ENCODE measurements at regions of chr1 and their contacts with region 1.

Region 1: DNA sequence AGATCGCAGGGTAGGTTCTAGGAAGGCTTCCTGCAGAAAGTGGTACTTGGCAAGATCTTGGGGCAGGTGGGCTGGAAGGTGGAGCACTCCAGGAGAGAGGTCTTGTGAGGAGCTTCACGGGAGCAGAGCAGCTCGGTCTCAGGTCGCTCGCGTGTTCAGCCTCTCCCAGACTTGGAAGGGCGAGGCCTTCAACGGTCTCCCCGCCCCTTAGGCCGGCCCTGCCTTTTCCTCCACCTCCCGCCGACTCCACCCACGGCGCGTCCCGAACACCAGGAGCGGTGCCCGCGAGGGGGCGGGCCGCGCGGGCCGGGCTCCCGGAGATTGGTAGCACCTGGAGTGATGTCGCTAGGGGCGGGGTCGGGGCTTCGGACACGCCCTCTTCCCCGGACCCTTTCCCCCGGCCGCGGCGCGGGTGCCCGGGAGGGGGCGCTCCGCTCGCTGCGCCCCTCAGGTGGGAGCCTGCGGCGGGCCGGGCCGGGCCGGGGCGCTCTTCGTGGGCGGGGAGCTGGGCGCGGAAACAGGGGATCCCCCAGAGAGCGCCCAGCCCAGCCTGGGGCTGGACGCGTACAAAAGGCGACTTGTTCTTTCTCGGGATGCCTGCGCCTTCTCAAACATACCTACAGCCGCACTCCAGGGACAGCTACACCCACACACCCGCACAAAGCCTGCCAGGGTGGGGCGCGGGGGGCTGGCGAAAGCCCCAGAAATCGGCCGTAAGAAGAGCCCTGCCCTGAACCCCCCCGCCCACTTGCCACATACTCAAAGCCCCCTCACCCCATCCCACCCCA is 35.5 kb downstream of the AHDC1 start:
- DNase-seq: peak; percentile 93
- ATAC-seq: peak; percentile 67
- H3K4me3 ChIP-seq: peak overlapping the region; percentile 47 to 66 (median 54)
- H3K27ac ChIP-seq: peak overlapping the region; percentile 67
- H3K4me1 ChIP-seq: peaks cover 96% of the 10 kb centered on the region
- H3K27me3 ChIP-seq: no peaks in the 10 kb centered on the region
- CTCF ChIP-seq: peak; percentile 78
- EP300 ChIP-seq: no peak
- POLR2A ChIP-seq: peak in 1 of 2 experiments; percentile 51; a peak in 2 of 4 replicates
- RAD21 ChIP-seq: peak; percentile 87

Region 2: DNA sequence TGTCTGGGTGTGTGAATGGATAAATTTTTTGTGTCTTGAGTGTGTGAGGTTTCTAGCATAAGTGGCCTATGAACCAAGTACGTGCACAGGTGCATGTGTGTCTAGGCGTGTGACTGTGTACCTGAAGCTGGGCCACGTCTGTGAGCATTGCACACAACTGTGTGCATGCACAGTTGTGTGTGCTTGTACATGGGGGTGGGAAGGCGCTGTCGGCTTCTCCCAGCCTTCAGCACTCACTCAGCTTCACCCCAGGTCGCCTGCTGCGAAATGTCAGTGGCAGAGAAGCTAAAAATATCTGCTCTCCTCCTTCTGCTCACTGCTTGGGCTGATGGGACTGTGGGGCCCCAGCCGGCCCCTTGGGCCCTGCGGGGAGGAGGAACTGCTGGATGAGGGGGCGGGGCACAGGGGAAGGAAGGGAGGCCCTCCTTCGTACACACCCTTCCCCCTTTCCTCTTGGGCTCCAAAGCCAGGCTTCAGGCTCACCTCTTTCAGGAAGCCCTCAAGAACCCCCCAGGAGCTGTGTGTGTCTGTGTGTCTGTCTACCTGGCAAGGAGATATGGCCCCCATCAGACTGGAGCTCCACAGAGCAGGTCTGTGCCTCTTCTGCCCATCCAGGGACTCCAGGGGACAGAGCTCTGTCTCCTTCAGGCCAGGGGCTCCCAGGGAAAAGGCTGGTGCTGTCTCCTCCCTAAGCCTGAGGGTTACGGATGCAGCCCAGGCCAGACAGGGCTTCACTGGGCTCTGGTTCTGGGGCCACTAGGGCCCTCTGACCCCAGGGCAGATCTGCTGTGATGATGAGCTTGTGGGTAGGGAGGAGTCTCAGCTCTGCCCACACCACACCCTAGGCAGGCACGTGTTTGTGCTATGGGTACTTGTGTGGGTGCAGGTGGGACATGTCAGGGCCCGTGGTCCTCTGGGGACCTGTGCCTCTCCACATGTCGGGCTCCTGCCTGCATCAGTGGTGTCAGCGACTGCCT is 42.9 kb before region 1 on chr1:
- CTCF ChIA-PET with region 1: no interaction called
- POLR2A ChIA-PET with region 1: interaction called, 10 read pairs
- in situ Hi-C with region 1: no loop called
- intact Hi-C with region 1: loop called (anchors 5 kb)
- DNase-seq: no peak
- ATAC-seq: no peak
- H3K4me3 ChIP-seq: peak overlapping the region in 2 of 3 experiments; percentile 11 to 79; a peak in 2 of 6 replicates
- H3K27ac ChIP-seq: no peak overlapping the region
- H3K4me1 ChIP-seq: peaks cover 88% of the 10 kb centered on the region
- H3K27me3 ChIP-seq: no peaks in the 10 kb centered on the region
- CTCF ChIP-seq: no peak
- EP300 ChIP-seq: no peak
- POLR2A ChIP-seq: no peak
- RAD21 ChIP-seq: no peak

Region 3: DNA sequence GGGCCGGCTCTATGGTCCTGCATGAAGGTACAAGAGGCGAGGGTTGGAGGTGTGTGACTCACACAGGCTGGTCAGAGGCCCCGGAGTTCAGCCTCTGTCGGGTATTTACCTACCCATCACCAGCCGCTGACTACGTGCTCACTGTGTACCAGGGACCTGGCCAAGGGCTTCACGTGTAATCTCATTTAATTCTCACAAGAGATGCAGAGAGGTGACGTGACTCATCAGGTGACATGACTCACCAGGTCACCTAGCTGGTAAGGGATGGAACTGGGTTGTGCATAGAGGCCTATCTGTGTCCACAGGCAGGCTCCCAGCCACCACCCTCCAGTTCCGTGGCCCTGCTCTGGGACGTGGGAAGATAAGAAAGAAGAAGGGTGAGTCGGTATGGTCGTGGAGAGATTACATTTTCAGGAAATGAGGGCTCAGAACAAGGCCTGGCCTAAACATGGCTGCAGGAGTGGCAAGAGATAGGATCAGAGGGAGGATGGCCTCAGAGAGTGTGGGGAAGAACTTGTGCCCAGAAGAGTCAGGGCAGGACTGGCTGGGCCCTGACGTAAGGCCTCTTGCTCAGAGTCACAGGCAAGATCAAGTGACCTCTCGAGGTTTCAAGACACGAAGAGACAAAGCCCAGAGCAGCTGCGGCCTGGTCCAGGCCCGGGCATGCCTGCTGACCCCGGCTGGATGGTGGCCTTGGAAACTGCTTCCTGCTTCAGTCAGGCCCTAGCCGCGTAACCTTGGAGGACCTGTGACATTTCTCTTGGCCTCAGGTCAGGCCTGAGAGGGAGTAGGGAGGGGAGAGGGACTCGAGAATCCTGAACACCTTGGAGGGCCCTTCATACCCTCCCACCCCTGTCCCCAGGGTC is 25.9 kb before region 1 on chr1:
- CTCF ChIA-PET with region 1: no interaction called
- POLR2A ChIA-PET with region 1: interaction called, 10 read pairs
- in situ Hi-C with region 1: no loop called
- intact Hi-C with region 1: no loop called
- DNase-seq: peak; percentile 93
- ATAC-seq: peak; percentile 93
- H3K4me3 ChIP-seq: peak overlapping the region in 1 of 3 experiments; percentile 48; a peak in 2 of 6 replicates
- H3K27ac ChIP-seq: peak overlapping the region; percentile 82
- H3K4me1 ChIP-seq: peaks cover 59% of the 10 kb centered on the region
- H3K27me3 ChIP-seq: no peaks in the 10 kb centered on the region
- CTCF ChIP-seq: no peak
- EP300 ChIP-seq: peak in 1 of 2 experiments; percentile 65; a peak in 2 of 4 replicates
- POLR2A ChIP-seq: peak; percentile 43 to 62; a peak in 3 of 4 replicates
- RAD21 ChIP-seq: no peak

Region 4: GRCh38 chr1:27556781-27557595 is 11.5 kb before region 1 on chr1:
- CTCF ChIA-PET with region 1: interaction called, 3 read pairs
- POLR2A ChIA-PET with region 1: interaction called, 48 read pairs
- in situ Hi-C with region 1: no loop called
- intact Hi-C with region 1: no loop called
- DNase-seq: peak; percentile 51
- ATAC-seq: peak; percentile 37
- H3K4me3 ChIP-seq: no peak overlapping the region
- H3K27ac ChIP-seq: peak overlapping the region; percentile 33
- H3K4me1 ChIP-seq: peaks cover 61% of the 10 kb centered on the region
- H3K27me3 ChIP-seq: no peaks in the 10 kb centered on the region
- CTCF ChIP-seq: peak; percentile 88
- EP300 ChIP-seq: no peak
- POLR2A ChIP-seq: no peak
- RAD21 ChIP-seq: peak; percentile 82

Region 5: GRCh38 chr1:27581823-27582243 is 13.3 kb after region 1 on chr1:
- CTCF ChIA-PET with region 1: no interaction called
- POLR2A ChIA-PET with region 1: interaction called, 15 read pairs
- in situ Hi-C with region 1: no loop called
- intact Hi-C with region 1: no loop called
- DNase-seq: no peak
- ATAC-seq: peak; percentile 91
- H3K4me3 ChIP-seq: no peak overlapping the region
- H3K27ac ChIP-seq: peak overlapping the region; percentile 41
- H3K4me1 ChIP-seq: peaks cover 69% of the 10 kb centered on the region
- H3K27me3 ChIP-seq: no peaks in the 10 kb centered on the region
- CTCF ChIP-seq: peak; percentile 32; the same call in 1 of the 2 replicates
- EP300 ChIP-seq: no peak
- POLR2A ChIP-seq: no peak
- RAD21 ChIP-seq: peak; percentile 23

Region 6: GRCh38 chr1:27628712-27629111 is 60.2 kb after region 1 on chr1:
- CTCF ChIA-PET with region 1: no interaction called
- POLR2A ChIA-PET with region 1: no interaction called
- in situ Hi-C with region 1: no loop called
- intact Hi-C with region 1: no loop called
- DNase-seq: no peak
- ATAC-seq: no peak
- H3K4me3 ChIP-seq: no peak overlapping the region
- H3K27ac ChIP-seq: no peak overlapping the region
- H3K4me1 ChIP-seq: peaks cover 27% of the 10 kb centered on the region
- H3K27me3 ChIP-seq: peaks cover 2 to 29% of the 10 kb centered on the region in 2 experiments; a peak in 3 of 5 replicates
- CTCF ChIP-seq: no peak
- EP300 ChIP-seq: no peak
- POLR2A ChIP-seq: no peak
- RAD21 ChIP-seq: no peak

Region 7: GRCh38 chr1:27662707-27663393 is 94.4 kb after region 1 on chr1:
- CTCF ChIA-PET with region 1: interaction called, 3 read pairs
- POLR2A ChIA-PET with region 1: interaction called, 7 read pairs
- in situ Hi-C with region 1: no loop called
- intact Hi-C with region 1: loop called (anchors 5 kb)
- DNase-seq: peak; percentile 73
- ATAC-seq: peak; percentile 83
- H3K4me3 ChIP-seq: peak overlapping the region in 2 of 3 experiments; percentile 7 to 35; a peak in 1 of 6 replicates
- H3K27ac ChIP-seq: no peak overlapping the region
- H3K4me1 ChIP-seq: peaks cover 32% of the 10 kb centered on the region
- H3K27me3 ChIP-seq: peaks cover 1 to 6% of the 10 kb centered on the region in 2 experiments; a peak in 1 of 5 replicates
- CTCF ChIP-seq: peak; percentile 88
- EP300 ChIP-seq: no peak
- POLR2A ChIP-seq: no peak
- RAD21 ChIP-seq: peak; percentile 93